GM12878 (cell line): ENCODE measurements at regions of chr19 and their contacts with region 1.

Region 1: DNA sequence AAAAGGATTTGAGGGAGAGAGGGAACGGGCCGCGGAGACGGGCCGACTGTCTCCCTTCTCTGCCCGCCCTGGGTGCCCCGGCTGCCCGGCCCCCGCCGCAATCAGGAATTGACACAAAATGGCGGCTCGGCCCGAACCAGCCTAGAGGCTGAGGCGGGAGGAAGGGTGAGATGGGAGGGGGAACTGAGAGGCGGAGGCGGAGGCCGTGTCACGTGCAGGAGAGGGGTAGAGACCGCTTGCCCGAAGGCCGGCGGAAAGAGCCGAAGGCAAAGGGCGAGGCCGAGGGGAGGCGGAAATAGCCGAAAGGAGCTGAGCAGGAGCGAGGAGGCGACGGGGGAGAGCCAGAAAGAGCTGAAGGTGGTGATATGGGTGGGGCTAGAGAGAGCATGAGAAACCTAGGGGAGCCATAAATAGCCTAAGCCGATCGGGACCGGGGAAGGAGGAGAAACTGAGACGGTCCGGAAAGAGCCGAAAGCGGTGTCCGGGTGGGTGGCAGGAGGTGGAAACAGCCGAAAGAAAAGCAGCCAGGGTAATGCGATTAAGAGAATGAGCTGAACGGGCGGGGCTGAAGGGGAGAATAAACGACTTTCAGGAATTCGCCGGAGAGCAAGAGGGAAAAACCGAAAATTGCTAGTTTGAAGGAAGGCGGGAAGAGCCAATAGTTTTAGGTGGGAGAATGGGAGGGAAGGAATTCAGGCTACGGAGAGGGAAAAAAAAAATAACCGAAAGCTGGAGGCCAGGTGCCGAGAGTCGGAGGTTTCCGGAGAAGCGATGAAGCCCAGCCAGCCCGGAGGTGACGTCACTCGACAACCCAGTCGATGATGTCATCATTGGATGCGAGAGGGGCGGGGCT is at the start of gene ZC3H4:
- DNase-seq: peak; percentile 100
- ATAC-seq: peak; percentile 87
- H3K4me3 ChIP-seq: peak within 1 kb of the TSS; percentile 98
- H3K27ac ChIP-seq: peak within 1 kb of the TSS; percentile 99
- H3K4me1 ChIP-seq: peaks cover 7% of the 10 kb centered on the region
- H3K27me3 ChIP-seq: no peaks in the 10 kb centered on the region
- CTCF ChIP-seq: no peak
- EP300 ChIP-seq: 0 out of 4 replicates have a peak, but pooled peaks of 1 of the 2 experiments have one; percentile 26
- POLR2A ChIP-seq: peak; percentile 90
- RAD21 ChIP-seq: no peak
- polyA plus RNA-seq, gene ZC3H4: 5.8 to 9.3 TPM

Region 2: GRCh38 chr19:45478454-45479238 is 1634.6 kb before region 1 on chr19:
- CTCF ChIA-PET with region 1: no interaction called
- POLR2A ChIA-PET with region 1: interaction called, 10 read pairs
- RAD21 ChIA-PET with region 1: no interaction called
- SMC1A ChIA-PET with region 1: no interaction called
- in situ Hi-C with region 1: no loop called
- intact Hi-C with region 1: no loop called
- DNase-seq: peak; percentile 88
- ATAC-seq: peak; percentile 94
- H3K4me3 ChIP-seq: peak overlapping the region; percentile 72
- H3K27ac ChIP-seq: peak overlapping the region; percentile 98
- H3K4me1 ChIP-seq: peaks cover 5% of the 10 kb centered on the region
- H3K27me3 ChIP-seq: no peaks in the 10 kb centered on the region
- CTCF ChIP-seq: peak; percentile 94 to 98 (median 96)
- EP300 ChIP-seq: no peak
- POLR2A ChIP-seq: peak; percentile 74
- RAD21 ChIP-seq: peak; percentile 89

Region 3: DNA sequence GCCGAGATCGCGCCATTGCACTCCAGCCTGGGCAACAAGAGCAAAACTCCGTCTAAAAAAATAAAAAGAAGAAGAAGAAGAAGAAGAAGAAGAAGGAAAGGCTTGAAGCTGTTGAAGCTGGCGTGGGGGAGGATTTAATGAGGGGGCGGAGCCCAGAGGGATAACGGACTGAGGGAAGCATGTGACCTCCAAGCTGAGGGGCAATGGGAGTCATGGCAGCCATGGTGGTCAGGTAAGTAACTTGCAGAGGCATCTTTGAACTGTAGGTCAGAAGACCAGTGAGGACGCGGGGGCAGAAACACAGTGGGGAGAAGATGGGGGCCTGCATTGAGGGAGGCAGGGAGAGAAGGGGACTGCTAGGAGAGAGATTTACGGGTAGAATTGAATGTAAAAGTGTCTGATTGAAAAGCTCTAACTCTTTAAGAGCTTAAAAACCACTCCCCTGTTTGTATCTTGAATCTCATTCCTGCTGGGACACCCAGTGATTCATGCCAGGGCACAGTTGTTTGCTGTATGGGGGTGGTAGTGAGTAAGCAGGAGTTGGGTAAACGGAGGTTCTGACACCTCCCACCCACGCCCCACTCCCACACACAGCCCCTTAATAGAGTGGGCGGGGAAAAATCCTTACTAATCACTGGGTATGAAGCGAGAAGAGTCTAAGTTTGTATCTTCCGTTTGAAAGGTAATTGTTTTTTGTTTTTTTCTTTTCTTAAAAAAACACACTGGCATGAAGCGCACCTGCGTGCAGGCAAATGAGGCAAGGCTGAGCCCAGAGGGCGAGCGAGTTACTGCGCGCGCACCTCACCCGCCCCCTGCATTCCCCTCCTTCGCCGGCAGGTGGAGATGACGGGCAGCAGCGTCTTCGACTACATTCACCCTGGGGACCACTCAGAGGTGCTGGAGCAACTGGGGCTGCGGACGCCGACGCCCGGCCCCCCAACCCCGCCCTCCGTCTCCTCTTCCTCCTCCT is 77.8 kb before region 1 on chr19:
- CTCF ChIA-PET with region 1: interaction called, 13 read pairs
- POLR2A ChIA-PET with region 1: interaction called, 3 read pairs
- RAD21 ChIA-PET with region 1: interaction called, 3 read pairs
- SMC1A ChIA-PET with region 1: interaction called, 4 read pairs
- in situ Hi-C with region 1: no loop called
- intact Hi-C with region 1: no loop called
- DNase-seq: peak; percentile 77
- ATAC-seq: peak; percentile 95
- H3K4me3 ChIP-seq: peak overlapping the region; percentile 77
- H3K27ac ChIP-seq: no peak overlapping the region
- H3K4me1 ChIP-seq: peaks cover 6% of the 10 kb centered on the region; the same call in 1 of the 2 replicates
- H3K27me3 ChIP-seq: no peaks in the 10 kb centered on the region; a peak in 1 of 4 replicates
- CTCF ChIP-seq: peak; percentile 95 to 97 (median 96)
- EP300 ChIP-seq: no peak
- POLR2A ChIP-seq: peak; percentile 50
- RAD21 ChIP-seq: peak; percentile 54; the same call in 1 of the 2 replicates

Region 4: DNA sequence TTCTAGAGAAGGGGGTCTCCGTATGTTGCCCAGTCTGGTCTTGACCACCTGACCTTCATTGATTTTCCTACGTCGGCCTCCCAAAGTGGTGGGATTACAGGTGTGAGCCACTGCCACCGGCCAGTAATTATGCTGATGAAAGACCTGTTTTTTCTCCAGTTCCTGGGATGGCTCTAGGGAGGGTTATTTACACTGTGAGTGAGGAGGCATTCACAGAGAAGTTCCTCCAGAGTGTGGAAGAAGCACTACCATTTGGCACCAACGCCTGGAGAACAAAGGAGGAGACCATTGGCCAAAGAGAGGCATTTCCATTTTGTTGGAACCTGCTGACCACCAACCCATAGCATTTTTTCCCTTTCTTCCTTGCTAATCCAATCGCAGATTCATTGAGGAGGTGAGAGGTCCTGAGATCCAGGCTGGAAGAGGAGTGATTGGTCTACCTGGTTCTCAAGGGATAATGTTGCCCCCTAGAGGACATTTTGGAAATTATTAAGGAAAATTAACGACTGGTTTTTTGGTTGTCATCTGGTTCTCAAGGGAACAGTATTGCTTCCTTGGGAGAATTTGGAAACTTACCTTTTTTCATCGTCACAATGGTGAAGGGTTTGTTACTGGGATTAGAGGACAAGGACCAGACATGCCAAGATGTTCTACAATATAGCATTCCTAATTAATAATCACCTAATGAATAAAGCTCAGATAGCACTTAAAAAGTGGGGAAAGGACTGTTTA is 11.9 kb after region 1 on chr19:
- CTCF ChIA-PET with region 1: interaction called, 19 read pairs
- POLR2A ChIA-PET with region 1: interaction called, 45 read pairs
- RAD21 ChIA-PET with region 1: interaction called, 16 read pairs
- SMC1A ChIA-PET with region 1: interaction called, 15 read pairs
- in situ Hi-C with region 1: no loop called
- intact Hi-C with region 1: no loop called
- DNase-seq: no peak
- ATAC-seq: peak; percentile 76
- H3K4me3 ChIP-seq: no peak overlapping the region
- H3K27ac ChIP-seq: no peak overlapping the region
- H3K4me1 ChIP-seq: no peaks in the 10 kb centered on the region; the same call in 1 of the 2 replicates
- H3K27me3 ChIP-seq: no peaks in the 10 kb centered on the region
- CTCF ChIP-seq: peak; percentile 59 to 81 (median 65)
- EP300 ChIP-seq: no peak
- POLR2A ChIP-seq: no peak
- RAD21 ChIP-seq: peak; percentile 89

Region 5: DNA sequence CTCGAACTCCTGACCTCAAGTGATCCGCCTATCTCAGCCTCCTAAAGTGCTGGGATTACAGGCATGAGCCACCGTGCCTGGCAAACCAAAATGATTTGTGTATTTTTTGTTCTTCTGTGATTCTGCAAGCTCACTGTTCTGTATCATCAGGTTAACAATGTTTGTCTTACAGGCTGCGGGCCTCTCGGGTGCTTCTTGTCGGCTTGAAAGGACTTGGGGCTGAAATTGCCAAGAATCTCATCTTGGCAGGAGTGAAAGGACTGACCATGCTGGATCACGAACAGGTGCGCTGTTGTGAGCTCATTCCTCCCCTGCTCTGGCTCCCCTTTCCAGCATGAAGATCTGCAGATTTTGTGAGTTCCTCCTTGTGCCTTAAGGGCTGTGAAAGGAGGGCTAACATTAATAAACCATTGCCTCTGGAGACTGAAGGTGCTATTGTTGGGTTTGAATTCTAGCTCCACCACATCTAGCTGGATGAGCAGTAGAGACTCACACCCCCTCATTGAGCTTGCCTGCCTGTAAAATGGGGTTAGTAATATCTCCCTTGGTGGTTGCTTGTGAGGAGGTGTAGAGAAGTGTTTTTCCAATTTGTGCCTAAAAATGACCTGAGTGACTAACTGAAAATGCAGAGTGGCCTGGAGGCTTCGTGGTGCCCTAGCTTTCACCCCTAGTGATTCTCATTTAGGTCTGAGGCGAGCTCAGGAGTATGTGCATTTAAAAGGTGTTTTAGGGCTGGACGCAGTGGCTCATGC is 30.3 kb after region 1 on chr19:
- CTCF ChIA-PET with region 1: no interaction called
- POLR2A ChIA-PET with region 1: interaction called, 10 read pairs
- RAD21 ChIA-PET with region 1: no interaction called
- SMC1A ChIA-PET with region 1: no interaction called
- in situ Hi-C with region 1: no loop called
- intact Hi-C with region 1: no loop called
- DNase-seq: no peak
- ATAC-seq: no peak
- H3K4me3 ChIP-seq: no peak overlapping the region
- H3K27ac ChIP-seq: no peak overlapping the region
- H3K4me1 ChIP-seq: no peaks in the 10 kb centered on the region
- H3K27me3 ChIP-seq: no peaks in the 10 kb centered on the region
- CTCF ChIP-seq: no peak
- EP300 ChIP-seq: no peak
- POLR2A ChIP-seq: no peak
- RAD21 ChIP-seq: no peak